Tibial artery (tissue), 4 donors: ENCODE measurements at regions of chr15 and their contacts with region 1.

Region 1: DNA sequence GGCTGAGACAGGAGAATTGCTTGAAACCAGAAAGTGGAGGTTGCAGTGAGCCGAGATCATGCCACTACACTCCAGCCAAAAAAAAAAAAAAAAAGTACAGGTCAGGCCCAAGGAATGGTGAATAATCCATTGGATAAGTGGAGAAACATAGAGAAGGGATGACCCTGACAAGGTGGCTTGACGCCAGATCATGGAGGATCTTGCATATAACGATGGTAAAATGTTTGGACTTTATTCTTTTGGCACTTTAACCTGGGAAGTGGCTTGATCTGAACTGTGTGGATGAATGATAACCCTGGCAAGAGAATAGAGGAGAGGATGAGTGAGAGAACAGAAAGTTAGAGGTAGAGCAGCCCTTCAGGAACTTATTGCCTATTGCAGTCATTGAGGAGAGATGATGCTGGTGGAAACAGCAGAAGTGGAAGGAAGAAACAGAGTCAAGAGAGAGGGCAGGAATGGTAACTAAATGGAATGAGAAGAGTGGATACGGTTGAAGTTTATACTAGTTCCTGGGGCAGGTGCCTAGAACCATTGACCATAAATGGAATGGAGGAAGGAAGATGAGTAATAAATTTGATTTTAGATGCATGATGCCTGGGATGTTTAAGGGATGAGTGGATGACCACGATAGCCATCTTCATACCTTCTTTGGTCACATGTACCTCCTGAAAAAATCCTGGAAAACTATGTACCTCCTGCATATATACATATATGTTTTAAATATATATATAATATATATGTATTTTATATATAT is 57.8 kb downstream of the BLM start:
- DNase-seq: no peak
- H3K4me3 ChIP-seq: no peak overlapping the region
- H3K27ac ChIP-seq: no peak overlapping the region
- H3K4me1 ChIP-seq: no peaks in the 10 kb centered on the region
- H3K27me3 ChIP-seq: no peaks in the 10 kb centered on the region
- CTCF ChIP-seq: no peak

Region 2: GRCh38 chr15:88878720-88879184 is 1896.2 kb before region 1 on chr15:
- intact Hi-C with region 1: no loop called
- DNase-seq: no peak
- H3K4me3 ChIP-seq: no peak overlapping the region
- H3K27ac ChIP-seq: peak overlapping the region in 1 of 2 donors; percentile 37
- H3K4me1 ChIP-seq: peaks cover 0 to 60% (median 10%) of the 10 kb centered on the region in 4 donors
- H3K27me3 ChIP-seq: no peaks in the 10 kb centered on the region
- CTCF ChIP-seq: peak; percentile 42 to 61

Region 3: DNA sequence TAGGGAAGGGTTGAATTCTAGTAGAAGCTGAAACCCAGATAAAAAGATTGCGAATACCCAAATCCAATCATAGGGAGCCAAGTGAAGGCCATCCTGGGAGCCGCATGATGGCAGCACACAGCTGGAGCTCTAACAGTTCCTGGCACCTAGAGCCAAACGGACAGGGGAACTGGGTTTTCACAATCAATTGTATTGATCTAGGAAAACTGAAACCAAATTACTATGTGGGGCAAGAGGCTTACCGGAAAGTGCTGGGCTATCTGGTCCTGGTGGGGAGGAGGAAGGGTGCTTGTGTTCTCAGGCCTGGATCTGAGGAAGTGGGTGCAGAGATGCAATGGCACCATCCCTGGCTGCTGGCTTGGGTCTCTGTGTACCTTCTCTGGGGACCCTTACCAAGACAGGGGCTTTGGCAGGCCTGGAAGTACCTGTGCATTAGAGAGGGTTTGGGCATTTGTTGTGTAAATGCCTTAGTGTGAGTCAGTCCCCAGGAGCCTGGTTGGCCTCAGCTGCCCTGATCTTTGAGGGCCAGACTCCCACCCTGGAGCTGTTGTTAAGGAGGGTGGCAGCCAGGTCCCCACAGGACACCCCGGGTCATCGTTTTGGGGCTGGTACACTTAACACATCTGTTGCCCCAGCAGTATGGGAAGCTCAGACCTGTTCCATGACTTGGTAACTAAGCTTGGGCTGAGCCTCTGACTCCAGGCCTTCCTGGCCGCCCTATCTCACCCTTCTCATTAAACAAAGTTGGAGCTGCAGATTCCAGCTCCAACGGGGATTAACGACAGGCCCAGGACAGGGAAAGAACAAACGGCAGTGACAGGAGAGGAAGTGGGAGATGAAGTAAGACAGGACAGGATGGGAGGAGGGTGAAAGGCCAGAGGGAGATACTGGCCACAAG is 84.6 kb after region 1 on chr15:
- intact Hi-C with region 1: loop called (anchors 10 kb)
- DNase-seq: no peak
- H3K4me3 ChIP-seq: no peak overlapping the region
- H3K27ac ChIP-seq: no peak overlapping the region
- H3K4me1 ChIP-seq: no peaks in the 10 kb centered on the region
- H3K27me3 ChIP-seq: no peaks in the 10 kb centered on the region
- CTCF ChIP-seq: no peak

Region 4: GRCh38 chr15:90872486-90873379 is 97.8 kb after region 1 on chr15:
- intact Hi-C with region 1: no loop called
- DNase-seq: no peak
- H3K4me3 ChIP-seq: peak overlapping the region; percentile 78 to 87
- H3K27ac ChIP-seq: peak overlapping the region; percentile 97 to 98
- H3K4me1 ChIP-seq: peaks cover 0 to 45% (median 41%) of the 10 kb centered on the region in 4 donors
- H3K27me3 ChIP-seq: no peaks in the 10 kb centered on the region
- CTCF ChIP-seq: no peak